ENCODE measurements at regions of chr20 and their contacts with region 1.

Region 1: GRCh38 chr20:23420943-23421931 is at the start of gene NAPB:
- DNase-seq: peak; percentile 82 to 93 (median 91)
- ATAC-seq: peak; percentile 99
- H3K4me3 ChIP-seq: peak within 1 kb of the TSS; percentile 84
- H3K4me3 Mint-ChIP-seq: peak within 1 kb of the TSS; percentile 86 to 96 (median 92)
- H3K27ac ChIP-seq: peak within 1 kb of the TSS; percentile 87
- H3K27ac Mint-ChIP-seq: peak within 1 kb of the TSS; percentile 55 to 95 (median 89)
- H3K4me1 ChIP-seq: peaks cover 7 to 22% of the 10 kb centered on the region in 2 donors
- H3K4me1 Mint-ChIP-seq: peaks cover 21 to 55% (median 39%) of the 10 kb centered on the region in 7 donors
- H3K27me3 ChIP-seq: no peaks in the 10 kb centered on the region
- H3K27me3 Mint-ChIP-seq: peaks cover 0 to 11% (median 6%) of the 10 kb centered on the region in 5 donors
- total RNA-seq, gene NAPB: 11.4 to 20.4 (median 16.2) TPM

Region 2: GRCh38 chr20:23357767-23358591 is 63.3 kb before region 1 on chr20:
- CTCF ChIA-PET with region 1: interaction called, 4 read pairs
- POLR2A ChIA-PET with region 1: interaction called, 13 read pairs
- intact Hi-C with region 1: loop called (anchors 1 kb)
- DNase-seq: peak; percentile 97 to 99 (median 98)
- ATAC-seq: peak; percentile 81
- H3K4me3 ChIP-seq: peak overlapping the region; percentile 85
- H3K4me3 Mint-ChIP-seq: peak overlapping the region; percentile 91 to 95 (median 93)
- H3K27ac ChIP-seq: peak overlapping the region; percentile 92
- H3K27ac Mint-ChIP-seq: peak overlapping the region; percentile 94 to 98 (median 97)
- H3K4me1 ChIP-seq: peaks cover 14 to 22% of the 10 kb centered on the region in 2 donors
- H3K4me1 Mint-ChIP-seq: peaks cover 17 to 38% (median 34%) of the 10 kb centered on the region in 7 donors
- H3K27me3 ChIP-seq: no peaks in the 10 kb centered on the region
- H3K27me3 Mint-ChIP-seq: peaks cover 0 to 4% (median 0%) of the 10 kb centered on the region in 5 donors

Region 3: DNA sequence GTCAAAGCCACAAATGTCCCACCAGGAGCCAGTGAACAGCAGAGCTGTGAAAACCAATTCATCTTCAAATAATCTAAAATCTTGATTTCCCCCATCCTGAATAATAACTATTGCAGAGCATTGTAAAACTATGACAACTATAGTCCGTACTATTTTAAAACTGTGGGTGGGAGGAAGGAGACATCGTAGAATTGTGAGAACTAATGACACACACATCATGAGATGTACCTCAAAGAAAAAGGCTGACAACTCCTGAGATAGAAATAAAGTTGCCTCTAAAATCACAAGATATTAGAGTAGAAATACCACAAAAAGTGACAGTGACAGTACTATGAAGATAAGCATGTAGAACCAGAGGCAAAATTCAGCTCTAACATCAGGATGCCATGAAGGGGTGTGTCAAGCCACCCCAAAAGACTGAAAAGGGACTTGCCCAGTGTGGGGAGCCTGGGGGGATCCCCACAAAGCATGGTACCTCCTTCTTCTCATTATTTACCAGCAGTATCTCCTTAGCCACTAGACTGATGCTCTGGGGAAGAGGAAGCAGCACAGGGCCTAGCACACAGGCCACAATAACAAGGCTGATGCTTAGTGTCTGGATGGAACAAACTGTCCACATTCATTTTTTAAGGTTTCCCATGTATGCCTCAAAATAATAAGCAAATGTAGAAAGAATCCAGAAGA is 13.3 kb before region 1 on chr20:
- CTCF ChIA-PET with region 1: no interaction called
- POLR2A ChIA-PET with region 1: interaction called, 3 read pairs
- intact Hi-C with region 1: loop called in 1 of 2 experiments (anchors 1 kb)
- DNase-seq: peak in 2 of 9 donors; percentile 12 to 34
- ATAC-seq: peak; percentile 84
- H3K4me3 ChIP-seq: no peak overlapping the region
- H3K4me3 Mint-ChIP-seq: peak overlapping the region in 1 of 10 donors; percentile 65
- H3K27ac ChIP-seq: no peak overlapping the region
- H3K27ac Mint-ChIP-seq: peak overlapping the region in 3 of 9 donors; percentile 38 to 91 (median 41)
- H3K4me1 ChIP-seq: peaks cover 0 to 9% of the 10 kb centered on the region in 2 donors
- H3K4me1 Mint-ChIP-seq: peaks cover 23 to 60% (median 49%) of the 10 kb centered on the region in 7 donors
- H3K27me3 ChIP-seq: no peaks in the 10 kb centered on the region
- H3K27me3 Mint-ChIP-seq: no peaks in the 10 kb centered on the region

Region 4: DNA sequence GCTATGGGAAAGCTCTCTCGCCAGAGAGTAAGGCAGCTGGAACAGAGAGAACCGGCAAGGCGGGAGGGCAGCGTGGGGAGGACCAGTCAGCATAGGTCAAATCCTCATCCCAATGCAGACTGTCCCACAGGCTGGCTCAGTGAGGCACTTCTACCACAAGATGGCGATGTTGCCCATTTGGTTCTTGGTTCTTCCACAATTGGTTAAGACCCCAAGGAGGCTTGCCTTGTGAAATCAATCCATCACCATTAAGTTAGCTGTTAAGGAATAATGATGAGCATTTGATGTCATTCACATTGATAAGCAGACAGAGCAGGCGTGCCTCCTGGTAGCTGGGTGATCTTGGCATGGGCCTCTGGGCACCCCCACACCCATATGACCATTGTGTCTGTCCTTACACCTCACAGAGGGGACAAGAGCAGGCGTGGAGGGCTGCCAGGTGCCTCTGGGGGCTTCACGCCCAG is 20.6 kb after region 1 on chr20:
- CTCF ChIA-PET with region 1: no interaction called
- POLR2A ChIA-PET with region 1: no interaction called
- intact Hi-C with region 1: loop called in 1 of 2 experiments (anchors 1 kb)
- DNase-seq: peak in 8 of 9 donors; percentile 15 to 49 (median 29)
- ATAC-seq: peak; percentile 81
- H3K4me3 ChIP-seq: no peak overlapping the region
- H3K4me3 Mint-ChIP-seq: no peak overlapping the region
- H3K27ac ChIP-seq: no peak overlapping the region
- H3K27ac Mint-ChIP-seq: no peak overlapping the region
- H3K4me1 ChIP-seq: no peaks in the 10 kb centered on the region
- H3K4me1 Mint-ChIP-seq: peaks cover 0 to 4% (median 0%) of the 10 kb centered on the region in 7 donors
- H3K27me3 ChIP-seq: no peaks in the 10 kb centered on the region
- H3K27me3 Mint-ChIP-seq: peaks cover 0 to 2% (median 0%) of the 10 kb centered on the region in 5 donors